GM10248 (cell line): ENCODE measurements at regions of chr18 and their contacts with region 1.

Region 1: GRCh38 chr18:2331491-2331890 is 239.8 kb downstream of the METTL4 start:
- DNase-seq: no peak
- CTCF ChIP-seq: no peak

Region 2: GRCh38 chr18:2319811-2320210 is 11.7 kb before region 1 on chr18:
- CTCF ChIA-PET with region 1: interaction called, 16 read pairs
- POLR2A ChIA-PET with region 1: no interaction called
- DNase-seq: no peak
- CTCF ChIP-seq: no peak